ENCODE measurements at regions of chr15 and their contacts with region 1.

Region 1: DNA sequence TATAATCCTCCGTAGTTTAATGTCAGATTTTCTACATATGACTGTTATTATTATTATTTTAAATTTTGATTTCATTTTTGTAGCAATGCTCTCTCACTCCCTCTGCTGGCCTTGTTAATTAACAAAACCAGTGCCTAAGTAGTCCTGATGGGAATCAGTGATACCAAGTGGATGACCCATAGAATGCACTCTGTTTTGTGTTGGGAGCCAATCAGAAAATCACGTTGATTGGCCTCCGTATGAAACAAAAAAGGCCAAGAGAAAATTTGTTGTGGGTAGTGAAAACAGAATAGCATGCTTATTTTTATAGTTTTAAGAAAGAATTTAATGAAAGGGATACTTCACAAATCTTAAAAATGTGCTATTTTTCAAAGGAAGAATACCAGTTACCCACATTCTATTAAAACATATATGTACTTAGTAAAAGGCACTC is 34.4 kb upstream of the MEIS2 start:
- DNase-seq: peak; percentile 34
- ATAC-seq: peak; percentile 84
- H3K4me3 ChIP-seq: no peak overlapping the region
- H3K27ac ChIP-seq: no peak overlapping the region
- H3K4me1 ChIP-seq: no peaks in the 10 kb centered on the region
- H3K27me3 ChIP-seq: no peaks in the 10 kb centered on the region
- CTCF ChIP-seq: peak; percentile 49
- EP300 ChIP-seq: no peak
- POLR2A ChIP-seq: no peak
- RAD21 ChIP-seq: no peak

Region 2: GRCh38 chr15:36645106-36645505 is 489.6 kb before region 1 on chr15:
- CTCF ChIA-PET with region 1: no interaction called
- POLR2A ChIA-PET with region 1: no interaction called
- in situ Hi-C with region 1: no loop called
- intact Hi-C with region 1: loop called (anchors 10 kb)
- DNase-seq: no peak
- ATAC-seq: no peak
- H3K4me3 ChIP-seq: no peak overlapping the region
- H3K27ac ChIP-seq: no peak overlapping the region
- H3K4me1 ChIP-seq: peaks cover 6% of the 10 kb centered on the region; the same call in 1 of the 2 replicates
- H3K27me3 ChIP-seq: no peaks in the 10 kb centered on the region
- CTCF ChIP-seq: no peak
- EP300 ChIP-seq: no peak
- POLR2A ChIP-seq: no peak
- RAD21 ChIP-seq: no peak

Region 3: GRCh38 chr15:37122703-37123102 is 12.0 kb before region 1 on chr15:
- CTCF ChIA-PET with region 1: no interaction called
- POLR2A ChIA-PET with region 1: no interaction called
- in situ Hi-C with region 1: no loop called
- intact Hi-C with region 1: loop called (anchors 2 kb)
- DNase-seq: no peak
- ATAC-seq: no peak
- H3K4me3 ChIP-seq: no peak overlapping the region
- H3K27ac ChIP-seq: no peak overlapping the region
- H3K4me1 ChIP-seq: no peaks in the 10 kb centered on the region
- H3K27me3 ChIP-seq: no peaks in the 10 kb centered on the region; a peak in 1 of 5 replicates
- CTCF ChIP-seq: no peak
- EP300 ChIP-seq: no peak
- POLR2A ChIP-seq: no peak
- RAD21 ChIP-seq: no peak

Region 4: DNA sequence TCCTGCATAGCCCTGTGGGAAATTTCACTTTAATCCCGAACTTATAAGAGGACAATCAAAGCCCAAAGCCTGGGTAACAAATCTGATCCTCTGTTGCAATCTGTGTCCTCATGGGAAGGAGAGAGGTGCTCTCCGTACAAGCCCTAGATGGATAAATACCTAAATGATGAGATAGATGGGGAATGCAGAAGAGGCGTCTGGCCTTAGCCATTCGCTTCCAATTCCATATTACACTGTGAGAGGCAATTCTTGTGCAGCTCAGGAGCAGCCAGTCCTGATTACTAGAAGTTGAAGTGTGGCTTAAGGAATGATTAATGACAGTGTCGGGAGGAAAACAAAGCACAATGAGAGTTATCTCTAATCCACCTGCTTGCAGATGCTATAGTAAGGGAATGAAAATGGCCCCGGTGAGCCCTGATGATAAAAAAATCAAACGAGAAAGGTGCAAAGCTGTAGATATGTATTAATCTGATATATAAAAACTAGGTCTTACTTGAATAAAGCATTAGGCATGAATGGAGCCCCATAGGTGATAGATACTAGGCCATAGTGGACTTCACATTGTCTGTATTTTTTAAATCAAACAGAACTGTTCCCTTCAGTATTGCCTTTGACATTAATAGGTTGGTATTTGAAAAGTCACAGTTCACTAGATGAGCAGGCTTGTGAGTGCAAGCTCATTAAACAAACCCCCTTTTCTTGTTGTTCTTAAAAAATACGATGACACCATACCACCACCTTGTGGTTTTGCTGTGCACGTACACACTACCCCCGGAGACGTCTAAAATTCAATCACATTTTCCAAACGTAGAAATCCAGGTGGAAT is 745.5 kb after region 1 on chr15:
- CTCF ChIA-PET with region 1: no interaction called
- POLR2A ChIA-PET with region 1: no interaction called
- in situ Hi-C with region 1: no loop called
- intact Hi-C with region 1: loop called (anchors 10 kb)
- DNase-seq: peak; percentile 7
- ATAC-seq: peak; percentile 52
- H3K4me3 ChIP-seq: no peak overlapping the region
- H3K27ac ChIP-seq: no peak overlapping the region
- H3K4me1 ChIP-seq: no peaks in the 10 kb centered on the region
- H3K27me3 ChIP-seq: no peaks in the 10 kb centered on the region
- CTCF ChIP-seq: peak; percentile 66
- EP300 ChIP-seq: no peak
- POLR2A ChIP-seq: no peak
- RAD21 ChIP-seq: no peak